B cell (primary cell): ENCODE measurements at regions of chr3 and their contacts with region 1.

Region 1: DNA sequence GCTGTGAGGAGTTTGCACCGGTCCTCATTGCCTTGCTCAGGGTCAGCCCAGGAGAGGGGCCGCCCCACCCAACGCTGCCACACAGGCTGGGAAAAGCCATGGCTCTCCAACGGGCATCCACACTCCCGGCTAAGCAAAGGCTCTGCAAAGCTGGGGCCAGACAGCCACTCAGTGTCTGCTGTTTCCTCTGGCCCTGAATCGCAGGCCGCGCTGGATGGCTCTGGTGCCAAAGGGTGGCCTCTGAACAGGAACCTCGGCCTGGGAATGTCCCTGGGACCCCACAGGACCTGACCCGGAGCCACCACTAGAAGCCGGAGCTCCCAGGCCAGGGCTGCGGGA is 42.9 kb downstream of the RPN1 start:
- DNase-seq: no peak
- ATAC-seq: no peak
- H3K4me3 ChIP-seq: peak overlapping the region in 4 of 5 experiments; percentile 58 to 65 (median 62)
- H3K4me3 Mint-ChIP-seq: peak overlapping the region; percentile 68
- H3K27ac ChIP-seq: peak overlapping the region in 1 of 2 donors; percentile 25
- H3K27ac Mint-ChIP-seq: no peak overlapping the region
- H3K4me1 ChIP-seq: peaks cover 7 to 9% of the 10 kb centered on the region in 2 donors
- H3K4me1 Mint-ChIP-seq: peaks cover 2% of the 10 kb centered on the region
- H3K27me3 ChIP-seq: peaks cover 0 to 11% (median 3%) of the 10 kb centered on the region in 4 experiments
- H3K27me3 Mint-ChIP-seq: no peaks in the 10 kb centered on the region
- CTCF ChIP-seq: no peak

Region 2: DNA sequence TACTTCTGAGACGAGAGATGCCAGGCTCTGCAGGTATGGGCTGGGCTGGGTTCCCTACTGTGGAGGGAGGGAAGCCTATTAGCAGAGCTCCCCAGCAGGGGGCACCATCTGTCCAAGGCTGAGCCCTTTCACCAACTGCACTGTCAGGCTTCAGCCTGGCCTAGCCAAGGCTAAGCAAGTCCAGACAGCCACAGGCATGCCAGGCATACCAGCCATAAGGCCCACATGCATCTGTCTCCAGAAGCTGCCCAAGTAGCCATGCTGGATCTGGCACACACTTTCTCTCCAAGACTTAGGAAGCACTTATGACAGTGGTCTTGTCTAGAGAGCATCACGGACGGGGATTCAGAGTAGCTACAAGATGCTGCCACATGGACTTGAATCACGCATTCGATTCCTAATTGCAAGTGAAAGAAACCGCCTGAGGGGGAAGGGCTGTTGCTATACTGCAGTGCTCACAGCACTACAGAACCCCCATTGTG is 512.4 kb before region 1 on chr3:
- CTCF ChIA-PET with region 1: interaction called, 15 read pairs
- POLR2A ChIA-PET with region 1: no interaction called
- intact Hi-C with region 1: no loop called
- DNase-seq: peak; percentile 76
- ATAC-seq: peak; percentile 99
- H3K4me3 ChIP-seq: no peak overlapping the region
- H3K4me3 Mint-ChIP-seq: no peak overlapping the region
- H3K27ac ChIP-seq: no peak overlapping the region
- H3K27ac Mint-ChIP-seq: no peak overlapping the region
- H3K4me1 ChIP-seq: no peaks in the 10 kb centered on the region
- H3K4me1 Mint-ChIP-seq: no peaks in the 10 kb centered on the region
- H3K27me3 ChIP-seq: no peaks in the 10 kb centered on the region
- H3K27me3 Mint-ChIP-seq: no peaks in the 10 kb centered on the region
- CTCF ChIP-seq: peak; percentile 81

Region 3: GRCh38 chr3:128426128-128426921 is 181.4 kb before region 1 on chr3:
- CTCF ChIA-PET with region 1: interaction called, 29 read pairs
- POLR2A ChIA-PET with region 1: no interaction called
- intact Hi-C with region 1: no loop called
- DNase-seq: peak; percentile 64
- ATAC-seq: peak; percentile 97
- H3K4me3 ChIP-seq: peak overlapping the region in 2 of 5 experiments; percentile 8 to 34
- H3K4me3 Mint-ChIP-seq: no peak overlapping the region
- H3K27ac ChIP-seq: no peak overlapping the region
- H3K27ac Mint-ChIP-seq: no peak overlapping the region
- H3K4me1 ChIP-seq: peaks cover 3 to 4% of the 10 kb centered on the region in 2 donors
- H3K4me1 Mint-ChIP-seq: no peaks in the 10 kb centered on the region
- H3K27me3 ChIP-seq: peaks cover 0 to 26% (median 1%) of the 10 kb centered on the region in 4 experiments
- H3K27me3 Mint-ChIP-seq: peaks cover 25% of the 10 kb centered on the region
- CTCF ChIP-seq: peak; percentile 93

Region 4: GRCh38 chr3:129984125-129984524 is 1376.4 kb after region 1 on chr3:
- CTCF ChIA-PET with region 1: no interaction called
- POLR2A ChIA-PET with region 1: no interaction called
- intact Hi-C with region 1: no loop called
- DNase-seq: no peak
- ATAC-seq: no peak
- H3K4me3 ChIP-seq: no peak overlapping the region
- H3K4me3 Mint-ChIP-seq: no peak overlapping the region
- H3K27ac ChIP-seq: no peak overlapping the region
- H3K27ac Mint-ChIP-seq: no peak overlapping the region
- H3K4me1 ChIP-seq: no peaks in the 10 kb centered on the region
- H3K4me1 Mint-ChIP-seq: no peaks in the 10 kb centered on the region
- H3K27me3 ChIP-seq: no peaks in the 10 kb centered on the region
- H3K27me3 Mint-ChIP-seq: peaks cover 23% of the 10 kb centered on the region
- CTCF ChIP-seq: no peak